ENCODE measurements at regions of chr3 and their contacts with region 1.

Region 1: DNA sequence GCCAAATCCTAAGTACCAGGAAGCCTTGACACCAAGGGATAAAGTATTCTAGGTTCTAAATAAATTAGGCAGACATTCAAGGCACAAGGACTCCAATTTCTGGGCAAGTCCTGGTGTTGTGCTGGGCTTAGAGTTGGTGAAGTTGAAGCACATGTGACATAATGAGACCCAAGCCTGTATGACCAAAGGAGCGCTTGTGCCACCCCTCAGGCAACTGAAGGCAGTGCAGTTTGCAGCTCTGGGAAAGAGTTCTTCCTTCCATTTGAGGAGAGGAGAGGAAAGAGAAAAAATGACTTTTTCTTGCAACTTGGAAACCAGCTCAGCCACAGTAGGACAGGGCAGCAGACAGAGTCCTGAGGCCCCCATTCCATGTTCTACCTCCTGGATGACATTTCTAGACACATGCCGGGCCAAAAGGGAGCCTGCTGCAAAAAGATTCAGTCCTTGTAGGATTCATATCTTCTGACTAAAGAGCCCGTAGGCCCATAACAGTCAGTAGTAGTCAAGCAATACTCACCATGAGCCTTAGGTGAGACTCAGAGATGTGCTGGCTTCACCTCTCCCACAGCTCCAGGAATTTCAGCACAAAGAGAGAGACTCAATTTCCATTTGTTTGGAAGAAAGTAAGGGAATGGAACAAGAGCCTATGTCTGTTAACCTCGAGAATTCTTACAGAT is 588.8 kb upstream of the BCHE start:
- DNase-seq: no peak
- ATAC-seq: no peak
- H3K4me3 ChIP-seq: no peak overlapping the region
- H3K27ac ChIP-seq: no peak overlapping the region
- H3K4me1 ChIP-seq: no peaks in the 10 kb centered on the region
- H3K27me3 ChIP-seq: no peaks in the 10 kb centered on the region
- CTCF ChIP-seq: no peak
- POLR2A ChIP-seq: no peak

Region 2: DNA sequence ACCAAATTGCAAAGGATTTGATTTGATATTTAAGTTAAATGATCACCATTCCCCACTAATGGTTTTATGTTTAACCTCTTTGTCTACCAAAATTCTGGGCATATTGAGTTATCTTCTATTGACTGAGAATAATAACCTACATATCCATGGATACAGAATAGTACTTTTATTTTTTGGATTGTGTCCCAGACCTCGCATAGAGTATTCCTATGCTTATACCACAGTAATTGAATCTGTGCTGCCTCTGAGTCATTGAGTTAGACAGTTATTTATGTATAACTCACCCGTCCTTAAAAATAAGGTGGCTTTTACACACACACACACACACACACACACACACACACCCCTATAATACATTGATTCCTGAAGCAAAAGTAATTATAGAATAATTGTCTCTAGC is 101.3 kb after region 1 on chr3:
- in situ Hi-C with region 1: loop called in 1 of 4 experiments (anchors 25 kb)
- intact Hi-C with region 1: no loop called
- DNase-seq: no peak
- ATAC-seq: no peak
- H3K4me3 ChIP-seq: no peak overlapping the region
- H3K27ac ChIP-seq: no peak overlapping the region
- H3K4me1 ChIP-seq: no peaks in the 10 kb centered on the region
- H3K27me3 ChIP-seq: no peaks in the 10 kb centered on the region
- CTCF ChIP-seq: no peak
- POLR2A ChIP-seq: no peak

Measured in gastrocnemius medialis (tissue), 4 donors.